ENCODE measurements at regions of chr17 and their contacts with region 1.

Region 1: DNA sequence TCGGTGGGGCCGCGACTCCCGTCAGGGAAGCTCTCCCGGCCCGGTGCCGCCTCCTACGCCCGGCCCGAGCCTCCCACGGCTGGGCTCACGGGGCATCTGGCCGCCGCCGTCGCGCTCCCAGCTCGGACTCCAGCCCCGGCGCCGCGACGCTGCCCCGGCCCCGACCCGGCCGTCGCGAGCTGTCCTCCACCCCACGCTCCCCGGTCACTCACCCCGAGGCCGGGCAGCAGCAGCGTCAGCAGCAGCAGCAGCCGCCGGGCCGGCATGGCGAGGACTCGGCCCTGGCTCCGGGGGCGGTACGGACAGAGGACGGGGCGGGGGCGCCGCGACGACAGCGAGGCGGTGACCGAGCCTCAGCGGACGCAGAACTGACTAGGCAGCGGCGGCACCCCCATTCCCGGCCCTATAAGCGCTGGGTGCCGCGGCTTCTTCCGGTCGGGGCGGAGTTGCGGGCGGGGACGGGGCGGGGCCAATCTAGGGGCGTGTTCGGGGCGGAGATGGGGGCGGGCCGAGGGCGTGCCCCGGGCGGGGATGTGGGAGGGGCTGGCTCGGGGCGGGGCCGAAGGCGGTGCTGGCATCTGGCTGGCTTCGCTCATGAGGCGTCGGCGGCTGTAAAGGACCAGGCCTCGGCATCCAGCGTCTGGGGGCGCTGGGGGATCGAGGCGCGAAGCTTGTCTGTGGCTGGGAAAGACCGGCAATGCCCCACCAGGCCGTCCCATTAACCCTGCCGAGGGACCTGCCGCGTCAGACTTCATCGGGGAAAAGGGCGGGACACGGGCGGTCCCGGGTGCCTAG is at the start of gene ERN1:
- DNase-seq: peak; percentile 70 to 90
- H3K4me3 ChIP-seq: peak within 1 kb of the TSS; percentile 53
- H3K4me1 ChIP-seq: peaks cover 9% of the 10 kb centered on the region
- H3K27me3 ChIP-seq: no peaks in the 10 kb centered on the region

Region 2: DNA sequence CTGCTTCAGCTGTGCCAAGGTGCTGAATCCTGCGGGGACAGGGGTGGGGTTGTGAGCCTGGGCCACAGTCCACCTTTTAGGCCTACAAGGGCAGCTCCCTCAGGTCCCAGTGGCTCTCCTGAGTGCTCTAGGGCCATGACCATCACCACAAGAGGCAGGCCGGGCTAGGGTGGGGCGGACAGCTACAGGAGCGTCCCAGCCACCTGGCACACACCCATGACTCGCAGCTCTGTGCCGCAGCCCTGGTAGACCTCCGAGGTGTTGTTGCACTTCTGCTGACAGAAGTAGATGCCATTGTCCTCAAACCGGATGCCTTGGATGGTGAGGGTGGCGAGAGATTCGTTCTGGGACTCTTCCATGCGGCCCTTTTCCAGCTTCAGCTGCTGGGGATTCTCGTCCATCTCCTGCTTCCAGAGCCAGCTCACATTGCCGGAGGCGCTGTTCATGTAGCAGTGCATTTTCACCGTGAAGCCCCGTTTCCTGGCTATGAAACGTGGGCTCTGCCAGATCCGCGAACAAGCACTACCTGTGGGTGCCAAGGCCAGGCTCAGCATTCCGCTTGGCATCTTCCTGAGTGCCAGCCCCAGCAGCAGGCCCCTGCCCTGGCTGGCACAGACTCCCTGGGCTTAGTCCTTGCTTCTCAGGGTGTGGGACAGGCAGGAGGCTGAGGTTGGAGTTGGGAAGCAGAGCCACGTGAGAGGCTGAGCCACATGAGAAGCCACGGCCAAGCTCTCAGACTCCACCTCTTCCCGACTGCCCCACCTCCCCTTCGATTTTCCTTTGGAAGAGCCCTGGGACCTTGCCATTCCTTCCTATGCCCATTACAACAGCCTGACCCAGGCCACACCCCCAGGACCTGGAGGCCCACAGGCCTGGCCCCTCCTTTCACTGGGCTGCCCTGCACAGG is 199.8 kb before region 1 on chr17:
- in situ Hi-C with region 1: loop called (anchors 10 kb)
- DNase-seq: no peak
- H3K4me3 ChIP-seq: no peak overlapping the region
- H3K4me1 ChIP-seq: no peaks in the 10 kb centered on the region
- H3K27me3 ChIP-seq: no peaks in the 10 kb centered on the region

Region 3: GRCh38 chr17:64025732-64026294 is 104.1 kb before region 1 on chr17:
- in situ Hi-C with region 1: loop called (anchors 10 kb)
- DNase-seq: peak; percentile 58 to 90
- H3K4me3 ChIP-seq: peak overlapping the region; percentile 5
- H3K4me1 ChIP-seq: 0 out of 2 replicates have a peak, but pooled peaks cover 3% of the 10 kb centered on the region
- H3K27me3 ChIP-seq: no peaks in the 10 kb centered on the region

Region 4: DNA sequence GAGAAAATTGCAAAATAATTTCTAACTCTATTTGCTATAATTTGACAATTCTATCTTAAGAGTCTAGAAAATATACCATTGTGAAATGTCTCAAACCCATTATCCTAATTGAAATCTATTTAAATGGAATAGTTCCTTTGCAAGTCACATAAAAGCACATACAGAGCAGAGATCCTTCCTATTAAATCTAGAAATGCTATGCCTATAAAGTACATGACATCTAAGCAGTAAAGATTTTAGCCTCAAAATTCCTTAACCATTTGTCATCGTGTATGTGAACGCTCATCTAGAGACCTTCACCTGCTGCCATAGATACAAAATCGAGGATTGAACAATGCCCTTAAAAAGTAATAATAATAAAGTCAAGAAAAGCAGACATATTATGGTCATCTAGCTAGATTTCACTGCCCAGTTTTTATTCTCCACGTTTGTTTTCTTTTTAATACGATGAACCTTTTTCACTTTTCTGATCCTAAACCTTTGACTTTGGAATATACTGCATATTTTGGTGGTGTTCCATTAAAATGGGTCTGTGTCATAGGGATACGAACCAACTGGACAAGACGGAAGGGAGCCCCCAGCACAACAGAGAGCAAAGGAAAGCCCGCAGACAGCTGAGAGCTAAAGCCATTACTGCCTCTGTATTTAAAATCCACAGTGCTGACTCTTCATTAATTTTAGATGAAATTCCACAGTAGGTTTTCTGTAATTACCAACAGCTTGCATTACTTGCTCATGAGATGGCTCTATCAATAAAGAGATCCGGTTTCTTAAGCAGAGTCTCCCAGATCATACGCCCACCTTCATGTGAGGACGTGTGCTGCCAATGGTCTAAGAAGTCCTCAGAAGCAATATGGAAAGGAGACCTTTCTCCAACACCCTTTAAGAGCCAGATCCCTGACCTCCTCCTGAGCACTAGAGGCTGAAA is 115.5 kb after region 1 on chr17:
- in situ Hi-C with region 1: no loop called
- DNase-seq: no peak
- H3K4me3 ChIP-seq: no peak overlapping the region
- H3K4me1 ChIP-seq: peaks cover 5% of the 10 kb centered on the region
- H3K27me3 ChIP-seq: no peaks in the 10 kb centered on the region

Region 5: GRCh38 chr17:64297467-64298098 is 167.6 kb after region 1 on chr17:
- in situ Hi-C with region 1: no loop called
- DNase-seq: no peak
- H3K4me3 ChIP-seq: no peak overlapping the region
- H3K4me1 ChIP-seq: no peaks in the 10 kb centered on the region
- H3K27me3 ChIP-seq: no peaks in the 10 kb centered on the region

Measured in HAP-1 (cell line).